ENCODE measurements at regions of chr4 and their contacts with region 1.

Region 1: GRCh38 chr4:177484613-177485021 is 42.4 kb upstream of the AGA start:
- DNase-seq: peak; percentile 17
- ATAC-seq: no peak
- H3K4me3 ChIP-seq: no peak overlapping the region
- H3K27ac ChIP-seq: no peak overlapping the region
- H3K4me1 ChIP-seq: no peaks in the 10 kb centered on the region
- H3K27me3 ChIP-seq: no peaks in the 10 kb centered on the region
- CTCF ChIP-seq: no peak
- EP300 ChIP-seq: no peak
- POLR2A ChIP-seq: no peak
- RAD21 ChIP-seq: no peak

Region 2: DNA sequence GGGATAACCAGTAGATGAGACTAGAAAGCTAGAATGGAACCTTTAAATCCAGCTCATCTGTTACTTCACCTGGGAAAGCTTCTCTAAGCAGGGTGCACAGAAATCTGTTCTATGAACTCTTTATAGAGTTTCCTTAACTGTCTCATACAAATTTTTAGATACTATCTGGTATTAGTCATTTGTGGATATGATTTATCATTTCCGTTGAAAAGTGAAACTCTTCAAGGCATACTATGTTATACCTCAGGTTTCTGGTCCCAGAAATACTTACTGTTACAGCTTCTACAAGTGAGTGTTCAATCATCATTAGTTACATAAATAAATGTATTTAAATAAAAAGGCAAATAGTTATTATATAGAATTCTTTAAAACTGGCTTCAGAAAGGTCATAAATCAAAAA is 255.9 kb after region 1 on chr4:
- CTCF ChIA-PET with region 1: no interaction called
- POLR2A ChIA-PET with region 1: no interaction called
- in situ Hi-C with region 1: no loop called
- intact Hi-C with region 1: no loop called
- DNase-seq: no peak
- ATAC-seq: no peak
- H3K4me3 ChIP-seq: no peak overlapping the region
- H3K27ac ChIP-seq: no peak overlapping the region
- H3K4me1 ChIP-seq: no peaks in the 10 kb centered on the region
- H3K27me3 ChIP-seq: no peaks in the 10 kb centered on the region
- CTCF ChIP-seq: no peak
- EP300 ChIP-seq: no peak
- POLR2A ChIP-seq: no peak
- RAD21 ChIP-seq: no peak

Region 3: GRCh38 chr4:179124957-179125356 is 1640.3 kb after region 1 on chr4:
- CTCF ChIA-PET with region 1: no interaction called
- POLR2A ChIA-PET with region 1: no interaction called
- in situ Hi-C with region 1: no loop called
- intact Hi-C with region 1: loop called (anchors 5 kb)
- DNase-seq: no peak
- ATAC-seq: no peak
- H3K4me3 ChIP-seq: no peak overlapping the region
- H3K27ac ChIP-seq: no peak overlapping the region
- H3K4me1 ChIP-seq: no peaks in the 10 kb centered on the region
- H3K27me3 ChIP-seq: no peaks in the 10 kb centered on the region
- CTCF ChIP-seq: no peak
- EP300 ChIP-seq: no peak
- POLR2A ChIP-seq: no peak
- RAD21 ChIP-seq: no peak

Measured in HepG2 (cell line).